ENCODE measurements at regions of chr2 and their contacts with region 1.

Region 1: DNA sequence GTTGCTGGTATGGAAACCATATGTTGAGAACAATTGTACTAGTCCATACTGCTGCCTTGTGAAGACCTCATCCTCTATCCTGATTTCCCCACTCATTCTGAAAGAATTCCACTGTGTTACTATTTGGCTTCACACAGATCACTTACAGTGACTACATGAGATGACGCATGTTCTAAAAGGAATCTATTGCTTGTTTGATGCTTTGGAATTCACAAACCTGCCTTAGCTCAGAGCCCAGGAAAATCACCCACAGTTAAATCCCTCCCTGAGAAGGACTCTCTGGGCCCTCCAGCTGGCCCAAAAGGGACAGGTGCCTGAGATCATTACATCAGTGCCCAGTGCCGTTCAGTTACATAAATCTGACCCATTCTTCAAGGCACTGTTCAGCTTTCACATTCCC is 45.3 kb downstream of the KLHL29 start:
- DNase-seq: peak; percentile 45
- ATAC-seq: peak; percentile 87
- H3K4me3 ChIP-seq: no peak overlapping the region
- H3K27ac ChIP-seq: no peak overlapping the region
- H3K4me1 ChIP-seq: no peaks in the 10 kb centered on the region
- H3K27me3 ChIP-seq: no peaks in the 10 kb centered on the region
- CTCF ChIP-seq: no peak

Region 2: GRCh38 chr2:23241106-23241505 is 189.2 kb before region 1 on chr2:
- CTCF ChIA-PET with region 1: no interaction called
- POLR2A ChIA-PET with region 1: no interaction called
- intact Hi-C with region 1: no loop called
- DNase-seq: no peak
- ATAC-seq: no peak
- H3K4me3 ChIP-seq: no peak overlapping the region
- H3K27ac ChIP-seq: no peak overlapping the region
- H3K4me1 ChIP-seq: no peaks in the 10 kb centered on the region
- H3K27me3 ChIP-seq: 0 out of 2 replicates have a peak, but pooled peaks cover 11% of the 10 kb centered on the region
- CTCF ChIP-seq: no peak

Region 3: DNA sequence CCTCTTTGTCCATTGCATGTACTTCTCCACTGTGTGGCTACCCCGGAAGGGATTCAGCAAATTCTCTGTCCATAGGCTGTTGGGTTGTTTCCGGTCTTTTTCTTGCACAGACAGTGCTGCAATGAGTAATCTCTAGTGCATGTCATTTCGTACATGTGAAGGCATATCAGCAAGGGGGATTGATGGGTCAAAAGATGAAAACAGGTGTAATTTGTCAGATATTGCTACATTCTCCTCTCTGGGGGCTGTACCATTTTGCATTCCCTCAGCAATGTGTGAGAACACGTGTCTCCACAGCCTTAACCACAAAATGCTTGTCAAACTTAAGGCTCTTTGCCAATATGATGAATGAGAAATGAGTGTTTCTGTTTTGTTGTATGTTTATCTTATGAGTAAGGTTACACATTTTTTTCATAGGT is 15.2 kb after region 1 on chr2:
- CTCF ChIA-PET with region 1: no interaction called
- POLR2A ChIA-PET with region 1: no interaction called
- intact Hi-C with region 1: loop called (anchors 2 kb)
- DNase-seq: peak; percentile 89
- ATAC-seq: peak; percentile 90
- H3K4me3 ChIP-seq: no peak overlapping the region
- H3K27ac ChIP-seq: no peak overlapping the region
- H3K4me1 ChIP-seq: peaks cover 11% of the 10 kb centered on the region; the same call in 1 of the 2 replicates
- H3K27me3 ChIP-seq: no peaks in the 10 kb centered on the region
- CTCF ChIP-seq: no peak

Region 4: GRCh38 chr2:24365051-24365450 is 934.8 kb after region 1 on chr2:
- CTCF ChIA-PET with region 1: no interaction called
- POLR2A ChIA-PET with region 1: no interaction called
- intact Hi-C with region 1: no loop called
- DNase-seq: peak; percentile 42
- ATAC-seq: 0 out of 2 replicates have a peak, but pooled peaks have one; percentile 8
- H3K4me3 ChIP-seq: no peak overlapping the region
- H3K27ac ChIP-seq: no peak overlapping the region
- H3K4me1 ChIP-seq: peaks cover 11% of the 10 kb centered on the region
- H3K27me3 ChIP-seq: no peaks in the 10 kb centered on the region
- CTCF ChIP-seq: no peak